Naive thymus-derived CD4-positive, alpha-beta T cell (primary cell): ENCODE measurements at regions of chr7 and their contacts with region 1.

Region 1: GRCh38 chr7:17934094-17934493 is 6.2 kb downstream of the SNX13 start:
- DNase-seq: peak in 1 of 9 donors; percentile 14
- ATAC-seq: peak; percentile 55
- H3K4me3 ChIP-seq: no peak overlapping the region
- H3K4me3 Mint-ChIP-seq: peak overlapping the region in 8 of 10 donors; percentile 22 to 72 (median 48)
- H3K27ac ChIP-seq: no peak overlapping the region
- H3K27ac Mint-ChIP-seq: peak overlapping the region in 2 of 9 donors; percentile 14 to 44
- H3K4me1 ChIP-seq: peaks cover 21 to 24% of the 10 kb centered on the region in 2 donors
- H3K4me1 Mint-ChIP-seq: peaks cover 54 to 98% (median 89%) of the 10 kb centered on the region in 7 donors
- H3K27me3 ChIP-seq: no peaks in the 10 kb centered on the region
- H3K27me3 Mint-ChIP-seq: no peaks in the 10 kb centered on the region

Region 2: DNA sequence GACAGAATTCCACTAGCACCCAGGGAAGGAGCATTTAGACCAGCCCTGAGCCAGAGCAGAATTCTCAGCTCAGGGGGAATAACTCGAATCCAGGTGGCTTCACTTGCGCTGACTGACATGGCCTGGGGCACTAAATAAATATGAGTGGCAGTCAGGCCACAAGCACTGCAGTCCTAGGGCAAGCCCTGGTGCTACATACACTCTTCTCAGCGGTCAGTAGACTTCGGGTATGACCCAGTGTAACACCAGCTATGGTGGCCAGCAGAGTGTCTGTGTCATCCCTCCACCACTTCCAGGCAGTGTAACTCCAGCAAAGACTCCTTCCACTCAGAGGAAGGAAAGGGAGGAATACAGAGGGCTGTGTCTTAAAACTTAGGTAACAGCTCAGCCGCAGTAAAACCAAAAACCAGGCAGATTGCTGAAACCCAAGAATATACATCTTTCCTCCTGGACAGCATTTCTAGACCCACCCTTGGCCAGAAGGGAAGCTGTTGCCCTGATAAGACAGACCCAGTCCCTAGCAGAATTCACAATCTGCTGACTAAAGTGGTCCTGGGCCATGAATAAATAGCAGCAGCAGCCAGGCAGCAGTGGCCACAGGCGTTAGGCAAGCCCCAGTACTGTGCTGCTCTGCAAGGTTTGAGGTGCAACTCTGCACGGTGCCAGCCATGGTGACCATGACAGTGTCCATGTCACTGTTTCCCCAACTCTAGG is 70.8 kb before region 1 on chr7:
- CTCF ChIA-PET with region 1: no interaction called
- POLR2A ChIA-PET with region 1: no interaction called
- intact Hi-C with region 1: no loop called
- DNase-seq: no peak
- ATAC-seq: no peak
- H3K4me3 ChIP-seq: no peak overlapping the region
- H3K4me3 Mint-ChIP-seq: no peak overlapping the region
- H3K27ac ChIP-seq: no peak overlapping the region
- H3K27ac Mint-ChIP-seq: peak overlapping the region in 1 of 9 donors; percentile 2
- H3K4me1 ChIP-seq: no peaks in the 10 kb centered on the region
- H3K4me1 Mint-ChIP-seq: peaks cover 0 to 6% (median 4%) of the 10 kb centered on the region in 7 donors
- H3K27me3 ChIP-seq: no peaks in the 10 kb centered on the region
- H3K27me3 Mint-ChIP-seq: no peaks in the 10 kb centered on the region

Region 3: GRCh38 chr7:17921857-17922416 is 12.2 kb before region 1 on chr7:
- CTCF ChIA-PET with region 1: no interaction called
- POLR2A ChIA-PET with region 1: interaction called, 5 read pairs
- intact Hi-C with region 1: loop called in 1 of 2 experiments (anchors 2 kb)
- DNase-seq: no peak
- ATAC-seq: no peak
- H3K4me3 ChIP-seq: no peak overlapping the region
- H3K4me3 Mint-ChIP-seq: peak overlapping the region in 1 of 10 donors; percentile 3
- H3K27ac ChIP-seq: no peak overlapping the region
- H3K27ac Mint-ChIP-seq: peak overlapping the region in 1 of 9 donors; percentile 28
- H3K4me1 ChIP-seq: peaks cover 3 to 11% of the 10 kb centered on the region in 2 donors
- H3K4me1 Mint-ChIP-seq: peaks cover 0 to 80% (median 64%) of the 10 kb centered on the region in 7 donors
- H3K27me3 ChIP-seq: no peaks in the 10 kb centered on the region
- H3K27me3 Mint-ChIP-seq: no peaks in the 10 kb centered on the region

Region 4: GRCh38 chr7:18040196-18040595 is 106.1 kb after region 1 on chr7:
- CTCF ChIA-PET with region 1: no interaction called
- POLR2A ChIA-PET with region 1: no interaction called
- intact Hi-C with region 1: no loop called
- DNase-seq: no peak
- ATAC-seq: no peak
- H3K4me3 ChIP-seq: no peak overlapping the region
- H3K4me3 Mint-ChIP-seq: no peak overlapping the region
- H3K27ac ChIP-seq: no peak overlapping the region
- H3K27ac Mint-ChIP-seq: no peak overlapping the region
- H3K4me1 ChIP-seq: no peaks in the 10 kb centered on the region
- H3K4me1 Mint-ChIP-seq: no peaks in the 10 kb centered on the region
- H3K27me3 ChIP-seq: no peaks in the 10 kb centered on the region
- H3K27me3 Mint-ChIP-seq: peaks cover 0 to 3% (median under 1%) of the 10 kb centered on the region in 5 donors